GM13976 (cell line): ENCODE measurements at regions of chr10 and their contacts with region 1.

Region 1: DNA sequence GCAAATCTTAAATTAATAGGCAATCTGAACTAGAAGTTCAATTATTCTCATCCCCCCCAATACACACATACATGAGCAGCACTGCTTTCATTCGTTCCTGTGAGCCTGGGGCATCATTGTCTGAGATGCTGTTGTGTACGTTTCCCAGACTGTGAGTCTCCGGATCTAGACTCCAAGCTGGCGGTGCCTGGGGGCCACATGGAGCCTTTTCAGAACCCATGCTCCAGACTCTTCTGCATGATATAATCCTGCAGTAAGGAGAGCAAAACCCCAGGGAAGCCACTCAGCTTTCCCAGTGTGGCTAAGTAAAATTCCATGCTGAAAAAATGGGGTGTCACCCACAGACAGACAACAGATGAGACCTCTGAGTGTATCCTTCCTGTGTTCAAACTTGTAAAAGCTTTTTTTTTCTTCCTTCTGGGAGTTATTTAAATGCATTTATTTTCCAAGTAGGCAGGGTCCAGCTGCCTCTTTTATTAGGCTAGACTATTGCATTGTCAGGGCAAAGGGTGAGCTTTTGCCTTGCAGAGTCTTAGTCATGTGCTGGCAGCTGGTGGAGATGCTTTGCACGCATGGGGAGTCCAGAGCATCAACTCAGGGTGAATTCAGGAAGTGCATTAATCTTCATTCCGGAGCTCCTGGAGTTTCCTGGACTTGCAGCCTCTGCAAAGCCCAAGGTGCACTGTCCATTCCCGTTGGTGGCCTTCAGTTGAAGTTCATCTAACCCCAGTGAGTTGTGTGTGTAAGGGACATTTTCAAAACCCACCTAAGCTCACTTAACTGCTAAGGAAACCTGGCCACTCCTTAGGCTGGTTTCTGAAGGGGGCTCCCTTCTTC is 185.7 kb upstream of the ADO start:
- DNase-seq: no peak
- CTCF ChIP-seq: no peak

Region 2: DNA sequence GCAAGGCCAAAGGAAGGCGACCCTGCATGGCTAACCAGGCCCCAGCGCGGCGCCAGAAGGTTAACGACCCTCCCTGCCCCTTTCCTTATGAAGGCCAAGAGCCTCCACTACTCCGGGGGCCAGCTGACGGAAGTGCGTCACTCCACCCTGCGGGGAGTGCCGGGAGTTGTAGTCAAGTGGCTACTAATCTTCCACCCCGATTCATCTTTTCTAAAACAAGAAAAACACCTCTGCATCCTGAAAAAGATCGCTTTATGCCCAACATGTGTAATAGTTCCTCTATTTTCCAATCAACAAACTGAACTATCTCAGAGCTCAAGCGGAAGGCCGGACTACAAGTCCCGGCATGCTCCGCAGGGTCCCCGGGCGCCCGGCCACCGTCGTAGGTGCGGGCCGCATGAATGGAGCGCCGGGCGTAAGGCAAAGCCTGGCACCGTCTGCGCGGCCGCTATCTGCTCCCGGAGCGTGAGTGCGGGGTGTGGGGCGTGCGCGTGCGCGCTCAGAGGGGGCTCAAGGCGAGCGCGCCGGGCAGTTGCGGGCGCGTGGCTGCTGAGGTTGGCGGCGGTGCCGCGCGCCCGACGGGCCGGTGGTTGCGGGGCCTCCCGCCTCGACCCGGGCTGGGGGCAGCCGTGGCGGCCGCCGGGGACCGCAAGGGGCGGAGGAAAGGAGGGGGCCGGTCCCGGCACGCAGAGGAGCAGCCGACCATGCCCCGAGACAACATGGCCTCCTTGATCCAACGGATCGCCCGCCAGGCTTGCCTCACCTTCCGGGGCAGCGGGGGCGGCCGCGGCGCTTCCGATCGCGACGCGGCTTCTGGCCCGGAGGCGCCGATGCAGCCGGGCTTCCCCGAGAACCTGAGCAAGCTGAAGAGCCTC is 185.8 kb after region 1 on chr10 and contains the start of gene ADO:
- in situ Hi-C with region 1: loop called (anchors 5 kb)
- DNase-seq: peak; percentile 88
- CTCF ChIP-seq: no peak